ENCODE measurements at regions of chrX and their contacts with region 1.

Region 1: GRCh38 chrX:53081925-53082772 is at the start of gene TSPYL2:
- DNase-seq: peak; percentile 91
- H3K4me3 Mint-ChIP-seq: peak within 1 kb of the TSS; percentile 96
- H3K27ac Mint-ChIP-seq: peak within 1 kb of the TSS; percentile 83
- H3K4me1 Mint-ChIP-seq: peaks cover 25% of the 10 kb centered on the region
- H3K27me3 Mint-ChIP-seq: peaks cover 85% of the 10 kb centered on the region
- CTCF ChIP-seq: no peak
- total RNA-seq, gene TSPYL2: 39.3 and 41.6 TPM in 2 replicates

Region 2: GRCh38 chrX:53093748-53094583 is 11.8 kb after region 1 on chrX and contains the start of gene KANTR:
- CTCF ChIA-PET with region 1: interaction called, 5 read pairs
- POLR2A ChIA-PET with region 1: interaction called, 12 read pairs
- intact Hi-C with region 1: no loop called
- DNase-seq: peak; percentile 94
- H3K4me3 Mint-ChIP-seq: peak within 1 kb of the TSS; percentile 83
- H3K27ac Mint-ChIP-seq: peak within 1 kb of the TSS; percentile 4
- H3K4me1 Mint-ChIP-seq: peaks cover 7% of the 10 kb centered on the region
- H3K27me3 Mint-ChIP-seq: peaks cover 41% of the 10 kb centered on the region
- CTCF ChIP-seq: no peak
- total RNA-seq, gene KANTR: 3.4 and 6.3 TPM in 2 replicates

Region 3: GRCh38 chrX:53303195-53303594 is 221.0 kb after region 1 on chrX:
- CTCF ChIA-PET with region 1: no interaction called
- POLR2A ChIA-PET with region 1: no interaction called
- intact Hi-C with region 1: no loop called
- DNase-seq: no peak
- H3K4me3 Mint-ChIP-seq: no peak overlapping the region
- H3K27ac Mint-ChIP-seq: no peak overlapping the region
- H3K4me1 Mint-ChIP-seq: no peaks in the 10 kb centered on the region
- H3K27me3 Mint-ChIP-seq: peaks cover 44% of the 10 kb centered on the region
- CTCF ChIP-seq: no peak